Panc1 (cell line): ENCODE measurements at regions of chr14 and their contacts with region 1.

Region 1: GRCh38 chr14:41558490-41558889 is 48.2 kb upstream of the LRFN5 start:
- DNase-seq: no peak
- ATAC-seq: no peak
- H3K4me3 ChIP-seq: no peak overlapping the region
- H3K27ac ChIP-seq: no peak overlapping the region
- H3K4me1 ChIP-seq: no peaks in the 10 kb centered on the region
- H3K27me3 ChIP-seq: no peaks in the 10 kb centered on the region
- CTCF ChIP-seq: no peak

Region 2: DNA sequence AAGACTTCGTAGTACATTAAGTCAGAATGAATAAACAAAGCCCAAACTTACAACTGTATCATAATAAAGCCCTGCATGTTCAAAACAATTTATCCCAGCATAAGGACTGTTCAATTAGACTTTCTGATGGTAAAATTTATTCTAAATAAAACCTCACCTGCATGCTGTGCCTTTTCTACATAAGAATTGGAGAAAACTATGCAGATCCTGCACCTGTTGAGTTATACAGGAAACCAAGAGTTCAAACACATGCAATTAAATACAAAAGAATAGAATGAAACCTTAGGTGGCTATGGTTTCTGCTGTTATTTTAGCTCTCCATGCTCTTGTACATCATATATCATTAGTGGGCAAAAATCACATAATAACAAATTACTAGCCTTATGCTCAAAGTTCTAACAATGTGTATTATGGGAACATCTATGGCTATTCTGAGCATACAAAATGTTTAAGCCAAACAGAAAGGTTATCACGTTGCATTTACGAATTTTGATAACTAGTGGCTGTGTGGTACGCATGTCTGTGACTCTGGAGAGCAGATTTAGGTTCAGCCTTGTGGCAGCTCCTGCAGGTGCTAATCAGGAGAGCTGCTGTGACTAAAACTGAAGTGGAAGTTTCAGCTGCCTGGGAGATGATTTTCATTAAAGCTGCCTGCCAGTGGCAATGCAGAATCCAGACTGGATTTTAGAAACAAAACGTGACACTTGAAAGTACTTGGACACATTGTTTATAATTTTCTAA is 12.1 kb after region 1 on chr14:
- CTCF ChIA-PET with region 1: no interaction called
- POLR2A ChIA-PET with region 1: no interaction called
- in situ Hi-C with region 1: no loop called
- intact Hi-C with region 1: loop called (anchors 1 kb)
- DNase-seq: no peak
- ATAC-seq: no peak
- H3K4me3 ChIP-seq: no peak overlapping the region
- H3K27ac ChIP-seq: no peak overlapping the region
- H3K4me1 ChIP-seq: no peaks in the 10 kb centered on the region
- H3K27me3 ChIP-seq: no peaks in the 10 kb centered on the region; the same call in 1 of the 2 replicates
- CTCF ChIP-seq: no peak